Aorta (tissue), 5 donors: ENCODE measurements at regions of chr10 and their contacts with region 1.

Region 1: DNA sequence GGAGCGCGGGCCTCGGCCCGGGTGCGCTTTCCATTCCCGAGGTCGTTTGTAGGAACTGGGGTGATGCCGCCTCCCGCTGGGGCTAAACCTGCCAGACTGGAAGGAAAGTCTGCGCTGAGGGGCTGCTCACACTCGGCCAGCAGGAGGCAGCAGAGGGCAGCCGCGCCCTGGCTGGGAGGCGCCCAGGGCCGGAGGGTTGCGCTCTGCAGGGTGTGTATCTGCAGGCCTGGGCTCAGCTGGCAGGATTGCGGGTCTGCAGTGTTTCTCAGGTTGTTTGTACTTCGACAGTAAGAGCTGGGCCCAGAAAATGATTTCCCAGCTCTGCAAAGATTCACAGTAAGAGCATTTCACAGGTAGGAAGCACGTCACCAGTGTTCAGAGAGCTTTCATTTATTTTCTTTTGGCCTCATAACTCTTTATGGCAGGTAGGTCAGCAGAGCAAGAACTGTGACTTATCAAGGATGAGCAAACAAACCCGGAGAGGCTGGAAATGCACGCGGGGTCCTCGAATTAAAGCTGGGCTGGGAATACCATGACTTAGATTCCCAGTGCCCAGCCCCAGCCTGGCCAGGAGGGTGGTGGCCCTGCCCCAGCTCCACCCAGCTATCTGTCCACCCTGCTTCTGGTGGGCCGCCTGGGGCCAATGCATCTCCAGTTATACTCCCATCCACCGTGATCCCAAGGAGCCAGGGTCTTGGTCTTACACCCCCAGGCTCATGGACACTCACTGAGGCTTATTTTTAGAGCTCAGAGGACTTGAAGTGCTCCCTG is 15.2 kb upstream of the PPP2R2D start:
- DNase-seq: peak; percentile 81 to 93
- ATAC-seq: peak; percentile 90
- H3K4me3 ChIP-seq: no peak overlapping the region
- H3K27ac ChIP-seq: no peak overlapping the region
- H3K4me1 ChIP-seq: no peaks in the 10 kb centered on the region
- H3K27me3 ChIP-seq: no peaks in the 10 kb centered on the region

Region 2: DNA sequence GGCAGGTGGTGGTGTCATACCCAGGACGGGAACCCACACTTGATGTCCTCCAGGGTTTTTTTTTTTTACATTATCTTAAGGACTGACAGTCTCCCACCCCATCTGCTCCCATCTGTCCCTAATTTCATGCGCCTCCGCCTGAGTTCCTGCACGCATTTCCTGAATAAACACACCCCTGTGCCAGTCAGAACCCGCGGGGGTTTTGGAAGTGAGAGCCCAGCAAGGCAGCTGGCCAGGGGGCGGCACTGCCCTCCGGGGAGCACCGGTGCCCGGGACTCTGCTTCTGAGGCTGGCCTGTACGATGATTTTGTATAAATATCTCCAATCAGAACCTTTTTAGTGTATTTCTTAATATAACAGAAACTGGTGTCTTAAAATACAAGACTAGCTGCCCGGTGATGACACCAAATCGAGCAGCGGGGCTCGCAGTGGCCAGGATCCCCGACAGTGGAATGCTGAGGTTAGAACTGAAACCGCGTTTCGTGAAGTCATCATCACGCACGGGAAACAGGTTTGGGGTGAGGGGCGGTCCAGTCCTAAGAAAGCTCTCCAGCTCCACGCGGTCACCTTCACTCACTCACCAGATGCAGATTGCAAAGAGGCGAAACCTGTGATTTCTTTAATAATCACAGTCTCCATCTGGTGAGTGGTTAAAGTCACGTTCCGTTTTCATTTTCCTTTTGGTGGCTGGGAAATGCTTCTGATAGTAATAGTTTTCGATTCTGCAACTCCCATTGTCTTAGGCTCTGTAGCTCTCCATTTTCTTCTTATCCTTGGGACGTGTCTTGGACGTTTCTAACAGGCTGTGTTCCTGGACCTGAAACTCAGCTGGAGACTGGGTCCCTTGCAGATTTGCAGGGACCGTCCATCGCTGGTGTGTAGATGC is 76.4 kb after region 1 on chr10:
- intact Hi-C with region 1: no loop called
- DNase-seq: no peak
- ATAC-seq: no peak
- H3K4me3 ChIP-seq: no peak overlapping the region
- H3K27ac ChIP-seq: no peak overlapping the region
- H3K4me1 ChIP-seq: no peaks in the 10 kb centered on the region
- H3K27me3 ChIP-seq: no peaks in the 10 kb centered on the region

Region 3: GRCh38 chr10:132011024-132011423 is 125.4 kb after region 1 on chr10:
- intact Hi-C with region 1: no loop called
- DNase-seq: no peak
- ATAC-seq: no peak
- H3K4me3 ChIP-seq: no peak overlapping the region
- H3K27ac ChIP-seq: no peak overlapping the region
- H3K4me1 ChIP-seq: no peaks in the 10 kb centered on the region
- H3K27me3 ChIP-seq: no peaks in the 10 kb centered on the region

Region 4: GRCh38 chr10:132023092-132023811 is 137.7 kb after region 1 on chr10:
- intact Hi-C with region 1: loop called (anchors 1 to 2 kb)
- DNase-seq: peak; percentile 86 to 95
- ATAC-seq: peak; percentile 73
- H3K4me3 ChIP-seq: no peak overlapping the region
- H3K27ac ChIP-seq: no peak overlapping the region
- H3K4me1 ChIP-seq: no peaks in the 10 kb centered on the region
- H3K27me3 ChIP-seq: peaks cover 0 to 2% of the 10 kb centered on the region in 2 donors

Region 5: DNA sequence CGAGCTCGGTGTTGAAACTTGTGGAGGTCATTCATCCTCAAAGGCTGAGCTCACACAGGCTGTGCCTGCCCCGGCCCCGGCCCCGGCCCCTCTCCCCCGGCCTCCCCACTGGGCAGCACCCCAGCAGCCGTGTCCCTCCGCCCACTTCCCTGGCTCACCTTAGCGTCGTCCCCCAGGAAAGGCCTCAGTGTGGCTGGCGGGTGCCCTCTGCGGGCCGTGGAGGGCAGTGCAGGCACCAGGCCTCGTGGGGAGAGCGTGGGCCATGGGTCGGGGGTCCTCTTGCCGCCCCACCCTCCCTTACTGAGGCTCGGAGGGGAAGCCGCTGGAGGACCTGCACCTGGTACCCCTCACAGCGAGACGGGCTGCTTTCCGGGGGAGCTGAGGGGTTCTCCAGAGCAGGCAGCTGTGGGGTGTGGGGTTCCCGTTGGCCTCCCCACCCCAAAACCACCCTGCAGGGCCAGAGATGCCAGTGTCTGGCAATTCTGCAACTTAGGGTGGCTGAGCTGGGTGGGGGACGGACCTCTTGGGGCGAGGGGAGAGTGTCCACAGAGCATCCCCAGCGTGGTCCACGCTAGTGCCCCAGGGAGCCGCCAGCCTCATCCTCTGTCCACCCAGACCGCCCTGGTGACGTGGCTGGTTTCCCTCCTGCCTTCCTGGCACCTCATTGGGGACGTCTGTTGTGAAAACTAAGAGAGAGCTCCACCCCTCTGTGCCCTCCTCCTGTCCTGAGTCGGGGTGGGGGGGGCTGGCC is 257.0 kb after region 1 on chr10:
- intact Hi-C with region 1: loop called in 1 of 2 experiments (anchors 5 kb)
- DNase-seq: peak; percentile 53 to 78
- ATAC-seq: peak; percentile 42
- H3K4me3 ChIP-seq: no peak overlapping the region
- H3K27ac ChIP-seq: no peak overlapping the region
- H3K4me1 ChIP-seq: no peaks in the 10 kb centered on the region
- H3K27me3 ChIP-seq: no peaks in the 10 kb centered on the region